ENCODE measurements at regions of chr10 and their contacts with region 1.

Region 1: GRCh38 chr10:97210543-97210961 is 24.8 kb upstream of the SLIT1 start:
- DNase-seq: peak; percentile 64 to 74
- H3K4me3 ChIP-seq: no peak overlapping the region
- H3K27ac ChIP-seq: no peak overlapping the region
- H3K4me1 ChIP-seq: no peaks in the 10 kb centered on the region
- H3K27me3 ChIP-seq: no peaks in the 10 kb centered on the region
- CTCF ChIP-seq: peak; percentile 82 to 96 (median 90)
- POLR2A ChIP-seq: no peak

Region 2: GRCh38 chr10:97028126-97028831 is 182.3 kb before region 1 on chr10:
- intact Hi-C with region 1: no loop called
- DNase-seq: no peak
- H3K4me3 ChIP-seq: no peak overlapping the region
- H3K27ac ChIP-seq: no peak overlapping the region
- H3K4me1 ChIP-seq: no peaks in the 10 kb centered on the region
- H3K27me3 ChIP-seq: no peaks in the 10 kb centered on the region
- CTCF ChIP-seq: no peak
- POLR2A ChIP-seq: no peak

Region 3: GRCh38 chr10:97072851-97073665 is 137.5 kb before region 1 on chr10:
- intact Hi-C with region 1: loop called (anchors 5 kb)
- DNase-seq: peak; percentile 81 to 85
- H3K4me3 ChIP-seq: no peak overlapping the region
- H3K27ac ChIP-seq: no peak overlapping the region
- H3K4me1 ChIP-seq: no peaks in the 10 kb centered on the region
- H3K27me3 ChIP-seq: no peaks in the 10 kb centered on the region
- CTCF ChIP-seq: peak; percentile 65 to 96 (median 78)
- POLR2A ChIP-seq: no peak

Region 4: GRCh38 chr10:97250952-97251351 is 40.4 kb after region 1 on chr10:
- intact Hi-C with region 1: no loop called
- DNase-seq: no peak
- H3K4me3 ChIP-seq: no peak overlapping the region
- H3K27ac ChIP-seq: no peak overlapping the region
- H3K4me1 ChIP-seq: no peaks in the 10 kb centered on the region
- H3K27me3 ChIP-seq: no peaks in the 10 kb centered on the region
- CTCF ChIP-seq: no peak
- POLR2A ChIP-seq: no peak

Measured in thyroid gland (tissue), 4 donors.